T-cell (primary cell): ENCODE measurements at regions of chr21 and their contacts with region 1.

Region 1: GRCh38 chr21:33836408-33836807 is 79.2 kb downstream of the ATP5PO start:
- DNase-seq: no peak
- ATAC-seq: no peak
- H3K4me3 ChIP-seq: no peak overlapping the region
- H3K4me3 Mint-ChIP-seq: no peak overlapping the region
- H3K27ac ChIP-seq: no peak overlapping the region
- H3K27ac Mint-ChIP-seq: no peak overlapping the region
- H3K4me1 ChIP-seq: no peaks in the 10 kb centered on the region
- H3K4me1 Mint-ChIP-seq: no peaks in the 10 kb centered on the region
- H3K27me3 ChIP-seq: no peaks in the 10 kb centered on the region
- H3K27me3 Mint-ChIP-seq: no peaks in the 10 kb centered on the region

Region 2: DNA sequence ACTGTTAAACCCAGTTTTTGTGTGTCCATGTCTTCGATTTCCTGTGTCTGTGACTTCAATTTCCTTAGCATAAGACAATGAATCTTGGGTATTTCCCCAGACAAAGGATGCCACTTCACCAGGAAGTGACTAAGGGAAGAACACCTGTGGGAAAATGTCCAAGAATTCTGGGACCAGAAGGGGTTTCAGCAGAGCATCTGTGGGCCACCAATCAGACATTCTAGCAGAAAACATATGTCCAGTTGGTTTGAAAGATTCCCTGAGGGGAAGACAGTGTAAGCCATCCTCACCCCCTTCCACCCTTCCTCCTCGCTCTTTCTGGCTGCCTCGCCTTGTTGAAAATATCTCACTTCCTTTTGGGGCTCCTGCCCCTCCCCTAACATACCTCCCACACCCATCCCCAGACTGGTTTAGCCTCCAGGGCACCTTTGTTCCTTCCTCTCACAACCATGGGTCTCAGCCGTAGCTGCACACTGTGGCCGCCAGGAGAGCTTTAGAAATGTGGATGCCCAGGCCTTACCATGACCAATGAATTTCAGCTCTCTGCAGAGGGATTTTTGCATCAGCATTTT is 537.1 kb before region 1 on chr21:
- CTCF ChIA-PET with region 1: no interaction called
- POLR2A ChIA-PET with region 1: no interaction called
- DNase-seq: peak; percentile 7 to 57 (median 30)
- ATAC-seq: peak; percentile 85 to 95 (median 92)
- H3K4me3 ChIP-seq: peak overlapping the region in 1 of 2 donors; percentile 32
- H3K4me3 Mint-ChIP-seq: peak overlapping the region; percentile 46 to 70 (median 65)
- H3K27ac ChIP-seq: peak overlapping the region; percentile 62
- H3K27ac Mint-ChIP-seq: peak overlapping the region; percentile 88 to 95
- H3K4me1 ChIP-seq: peaks cover 28 to 38% of the 10 kb centered on the region in 2 experiments
- H3K4me1 Mint-ChIP-seq: peaks cover 43 to 61% (median 58%) of the 10 kb centered on the region in 3 donors
- H3K27me3 ChIP-seq: no peaks in the 10 kb centered on the region
- H3K27me3 Mint-ChIP-seq: no peaks in the 10 kb centered on the region

Region 3: DNA sequence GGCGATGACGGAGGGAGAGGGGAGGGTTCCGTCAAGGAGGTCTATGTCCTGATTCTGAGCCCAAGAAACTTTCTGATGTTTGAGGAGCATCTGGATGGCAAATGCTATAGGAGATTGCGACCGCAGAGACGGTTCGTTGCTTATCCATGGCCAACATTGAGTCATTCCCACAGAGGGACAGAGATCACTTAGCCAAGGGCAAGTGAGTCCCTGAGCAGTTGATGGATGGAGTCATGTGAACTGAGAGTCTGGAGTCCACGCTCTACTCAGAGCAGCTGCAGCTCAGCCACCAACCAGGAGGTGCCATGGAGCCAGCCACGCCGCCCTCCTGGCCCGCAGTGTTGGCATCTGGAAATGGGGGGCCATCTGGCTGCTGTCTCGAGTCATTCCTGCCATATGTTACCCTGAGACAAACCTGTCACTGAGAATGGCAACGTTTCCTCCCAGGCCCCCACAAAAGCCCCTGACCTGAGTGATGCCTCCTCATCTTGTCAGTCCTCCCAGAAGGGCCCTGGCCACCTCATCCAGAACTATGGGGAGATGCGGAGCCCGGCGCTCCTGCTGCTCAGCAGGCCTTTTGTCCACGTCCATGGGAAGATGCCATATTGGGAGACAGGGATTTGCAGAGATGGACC is 20.6 kb after region 1 on chr21:
- CTCF ChIA-PET with region 1: interaction called in 1 of 2 experiments, 5 read pairs
- POLR2A ChIA-PET with region 1: interaction called in 1 of 2 experiments, 11 read pairs
- DNase-seq: no peak
- ATAC-seq: no peak
- H3K4me3 ChIP-seq: no peak overlapping the region
- H3K4me3 Mint-ChIP-seq: no peak overlapping the region
- H3K27ac ChIP-seq: no peak overlapping the region
- H3K27ac Mint-ChIP-seq: no peak overlapping the region
- H3K4me1 ChIP-seq: no peaks in the 10 kb centered on the region
- H3K4me1 Mint-ChIP-seq: no peaks in the 10 kb centered on the region
- H3K27me3 ChIP-seq: peaks cover 0 to 32% of the 10 kb centered on the region in 2 experiments
- H3K27me3 Mint-ChIP-seq: peaks cover 7 to 12% of the 10 kb centered on the region in 2 donors